Activated B cell treated with CpG ODN at 0.5 μM for 24 hours (primary cell): ENCODE measurements at regions of chr1 and their contacts with region 1.

Region 1: GRCh38 chr1:169711469-169712281 is at the start of gene SELL:
- DNase-seq: no peak
- ATAC-seq: peak; percentile 78
- H3K4me3 Mint-ChIP-seq: peak within 1 kb of the TSS; percentile 90
- H3K27ac Mint-ChIP-seq: peak within 1 kb of the TSS; percentile 97
- H3K4me1 Mint-ChIP-seq: peaks cover 41% of the 10 kb centered on the region
- H3K27me3 Mint-ChIP-seq: no peaks in the 10 kb centered on the region
- CTCF ChIP-seq: peak; percentile 77
- total RNA-seq, gene SELL: 151 and 156 TPM in 2 replicates

Region 2: DNA sequence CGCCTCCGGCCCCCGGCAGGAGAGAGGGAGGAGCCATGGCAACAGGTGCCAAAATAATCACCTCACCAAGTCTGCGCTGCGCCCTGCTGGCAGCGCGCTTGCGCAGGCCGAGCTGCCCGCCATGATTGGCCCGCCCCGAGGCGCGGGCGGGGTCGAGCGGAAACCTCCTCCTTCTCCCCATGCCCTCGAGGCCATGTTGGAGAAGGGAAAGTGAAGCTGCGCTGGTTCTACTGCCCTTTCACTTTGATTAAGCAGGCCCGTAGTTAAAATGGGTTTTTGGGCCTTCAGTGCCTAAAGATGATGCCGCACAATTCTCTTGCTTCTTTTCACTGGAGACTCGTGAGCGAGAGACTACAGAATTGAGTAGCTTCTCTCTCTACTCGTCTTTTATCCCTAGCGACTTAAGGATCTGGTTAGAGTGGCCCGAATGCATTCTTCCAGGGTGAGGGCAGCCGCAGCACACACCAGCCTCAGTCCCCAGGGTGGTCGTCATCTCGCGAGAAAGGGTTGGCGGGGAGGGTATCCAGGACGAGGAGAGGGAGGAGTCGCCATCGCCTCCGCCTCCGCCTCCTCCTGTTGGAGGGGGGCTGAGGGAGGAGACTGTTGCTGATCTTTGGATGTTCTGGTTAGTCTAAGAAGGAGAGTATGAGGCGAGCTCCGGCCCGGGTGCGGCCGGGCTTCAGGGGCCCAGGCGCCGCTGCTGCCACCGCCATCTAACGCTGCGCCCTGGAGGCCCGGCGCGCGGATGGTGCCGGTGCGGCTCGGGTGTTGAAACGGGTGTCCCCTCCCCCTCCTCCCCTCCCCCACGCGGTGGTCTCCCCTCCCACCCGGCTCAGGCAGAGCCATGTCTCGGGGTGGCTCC is 1775.4 kb before region 1 on chr1 and contains the start of gene DCAF6:
- CTCF ChIA-PET with region 1: no interaction called
- POLR2A ChIA-PET with region 1: no interaction called
- intact Hi-C with region 1: loop called (anchors 10 kb)
- DNase-seq: peak; percentile 92
- ATAC-seq: peak; percentile 79
- H3K4me3 Mint-ChIP-seq: peak within 1 kb of the TSS; percentile 88
- H3K27ac Mint-ChIP-seq: peak within 1 kb of the TSS; percentile 100
- H3K4me1 Mint-ChIP-seq: peaks cover 35% of the 10 kb centered on the region
- H3K27me3 Mint-ChIP-seq: no peaks in the 10 kb centered on the region
- CTCF ChIP-seq: no peak
- total RNA-seq, gene DCAF6: 23.1 and 32.9 TPM in 2 replicates

Region 3: DNA sequence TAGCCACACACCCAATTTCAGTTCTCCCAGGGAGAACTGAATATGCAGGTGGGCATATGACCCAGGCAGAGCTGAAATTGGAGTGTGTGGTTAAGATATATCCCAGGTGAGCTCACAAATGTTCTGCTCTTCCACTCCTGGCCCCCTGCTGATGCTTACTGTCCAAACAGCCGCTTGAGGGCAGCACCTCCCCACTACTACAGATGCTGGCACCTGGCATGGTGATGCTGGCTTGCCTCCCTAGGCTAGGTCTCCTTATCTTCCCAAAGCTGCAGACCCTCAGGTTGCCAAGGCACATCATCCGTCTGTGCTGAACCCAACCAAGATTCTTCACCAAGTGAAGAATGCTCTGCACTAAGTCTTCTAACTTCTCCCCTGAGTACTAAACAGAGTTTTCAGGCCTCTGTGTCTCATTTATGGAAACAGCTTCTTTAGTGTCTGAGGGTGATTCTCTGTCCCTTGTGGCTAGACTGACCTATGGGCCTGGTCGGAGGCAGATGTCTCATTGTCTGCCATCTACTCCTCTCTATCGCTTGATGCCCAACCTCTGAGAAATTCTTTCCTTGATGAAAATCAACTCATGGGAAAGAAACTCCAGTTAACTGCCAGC is 1108.1 kb before region 1 on chr1:
- CTCF ChIA-PET with region 1: interaction called, 3 read pairs
- POLR2A ChIA-PET with region 1: no interaction called
- intact Hi-C with region 1: loop called (anchors 10 kb)
- DNase-seq: peak; percentile 31
- ATAC-seq: peak; percentile 45
- H3K4me3 Mint-ChIP-seq: no peak overlapping the region
- H3K27ac Mint-ChIP-seq: no peak overlapping the region
- H3K4me1 Mint-ChIP-seq: no peaks in the 10 kb centered on the region
- H3K27me3 Mint-ChIP-seq: peaks cover 8% of the 10 kb centered on the region
- CTCF ChIP-seq: no peak

Region 4: GRCh38 chr1:169295425-169295824 is 416.2 kb before region 1 on chr1:
- CTCF ChIA-PET with region 1: no interaction called
- POLR2A ChIA-PET with region 1: no interaction called
- intact Hi-C with region 1: no loop called
- DNase-seq: no peak
- ATAC-seq: no peak
- H3K4me3 Mint-ChIP-seq: no peak overlapping the region
- H3K27ac Mint-ChIP-seq: no peak overlapping the region
- H3K4me1 Mint-ChIP-seq: peaks cover 3% of the 10 kb centered on the region
- H3K27me3 Mint-ChIP-seq: no peaks in the 10 kb centered on the region
- CTCF ChIP-seq: no peak

Region 5: GRCh38 chr1:169485544-169486278 is 226.0 kb before region 1 on chr1 and contains the start of gene SLC19A2:
- CTCF ChIA-PET with region 1: no interaction called
- POLR2A ChIA-PET with region 1: interaction called, 5 read pairs
- intact Hi-C with region 1: loop called (anchors 1 kb)
- DNase-seq: peak; percentile 86
- ATAC-seq: peak; percentile 98
- H3K4me3 Mint-ChIP-seq: peak within 1 kb of the TSS; percentile 88
- H3K27ac Mint-ChIP-seq: peak within 1 kb of the TSS; percentile 82
- H3K4me1 Mint-ChIP-seq: peaks cover 27% of the 10 kb centered on the region
- H3K27me3 Mint-ChIP-seq: no peaks in the 10 kb centered on the region
- CTCF ChIP-seq: no peak
- total RNA-seq, gene SLC19A2: 3.0 and 3.6 TPM in 2 replicates

Region 6: DNA sequence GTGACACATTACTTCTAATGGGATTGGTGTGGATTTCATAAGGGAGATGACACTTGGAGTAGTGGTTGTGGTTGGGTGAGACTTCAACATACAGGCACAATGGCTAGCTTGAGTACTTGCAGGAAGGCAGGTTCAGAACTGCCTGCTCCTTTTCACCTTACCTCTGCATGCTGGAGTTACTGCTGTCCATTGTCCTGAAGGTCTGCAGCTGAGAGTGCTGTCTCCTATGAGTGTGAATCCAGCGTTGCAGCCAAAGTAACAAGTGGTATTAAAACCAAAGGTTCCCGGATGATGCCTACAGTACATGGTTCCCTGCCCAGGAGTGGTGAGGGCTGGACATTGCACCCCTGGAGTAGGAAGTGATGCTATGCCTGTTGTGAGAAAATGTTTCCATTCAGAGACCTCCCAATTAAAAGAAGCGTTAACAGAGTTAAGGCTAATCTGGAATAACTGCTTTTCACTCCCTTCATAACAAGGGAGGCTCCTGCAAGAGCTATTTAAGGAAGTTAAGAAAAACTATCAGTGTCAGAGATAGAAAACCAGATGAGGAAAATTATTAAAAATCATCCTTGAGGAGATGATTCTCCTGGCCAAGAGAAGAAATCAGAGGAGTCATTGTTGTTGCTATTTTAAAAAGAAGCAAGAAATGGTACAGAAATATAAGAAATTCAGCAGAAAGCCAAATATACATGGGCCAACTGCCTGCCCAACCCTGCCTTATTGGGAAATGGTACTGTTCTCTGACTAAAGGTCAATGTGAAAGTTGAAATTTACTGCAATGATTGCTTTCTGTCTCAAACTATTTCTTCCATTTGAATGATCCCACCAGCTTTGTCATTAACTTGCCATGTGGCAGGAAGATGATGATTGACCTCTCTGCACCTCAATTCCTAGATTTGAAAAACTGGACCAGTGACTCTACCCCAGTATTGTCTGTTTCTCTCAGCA is 115.6 kb before region 1 on chr1:
- CTCF ChIA-PET with region 1: interaction called, 312 read pairs
- POLR2A ChIA-PET with region 1: interaction called, 34 read pairs
- intact Hi-C with region 1: loop called (anchors 1 kb)
- DNase-seq: no peak
- ATAC-seq: no peak
- H3K4me3 Mint-ChIP-seq: no peak overlapping the region
- H3K27ac Mint-ChIP-seq: no peak overlapping the region
- H3K4me1 Mint-ChIP-seq: peaks cover 19% of the 10 kb centered on the region
- H3K27me3 Mint-ChIP-seq: no peaks in the 10 kb centered on the region
- CTCF ChIP-seq: no peak

Region 7: GRCh38 chr1:169680377-169681019 is 31.2 kb before region 1 on chr1:
- CTCF ChIA-PET with region 1: interaction called, 20 read pairs
- POLR2A ChIA-PET with region 1: interaction called, 20 read pairs
- intact Hi-C with region 1: loop called (anchors 1 kb)
- DNase-seq: no peak
- ATAC-seq: peak; percentile 84
- H3K4me3 Mint-ChIP-seq: peak overlapping the region; percentile 57
- H3K27ac Mint-ChIP-seq: peak overlapping the region; percentile 91
- H3K4me1 Mint-ChIP-seq: peaks cover 65% of the 10 kb centered on the region
- H3K27me3 Mint-ChIP-seq: no peaks in the 10 kb centered on the region
- CTCF ChIP-seq: no peak

Region 8: GRCh38 chr1:169779980-169780379 is 68.3 kb after region 1 on chr1:
- CTCF ChIA-PET with region 1: no interaction called
- POLR2A ChIA-PET with region 1: no interaction called
- intact Hi-C with region 1: no loop called
- DNase-seq: no peak
- ATAC-seq: no peak
- H3K4me3 Mint-ChIP-seq: no peak overlapping the region
- H3K27ac Mint-ChIP-seq: no peak overlapping the region
- H3K4me1 Mint-ChIP-seq: no peaks in the 10 kb centered on the region
- H3K27me3 Mint-ChIP-seq: peaks cover 21% of the 10 kb centered on the region
- CTCF ChIP-seq: no peak

Region 9: DNA sequence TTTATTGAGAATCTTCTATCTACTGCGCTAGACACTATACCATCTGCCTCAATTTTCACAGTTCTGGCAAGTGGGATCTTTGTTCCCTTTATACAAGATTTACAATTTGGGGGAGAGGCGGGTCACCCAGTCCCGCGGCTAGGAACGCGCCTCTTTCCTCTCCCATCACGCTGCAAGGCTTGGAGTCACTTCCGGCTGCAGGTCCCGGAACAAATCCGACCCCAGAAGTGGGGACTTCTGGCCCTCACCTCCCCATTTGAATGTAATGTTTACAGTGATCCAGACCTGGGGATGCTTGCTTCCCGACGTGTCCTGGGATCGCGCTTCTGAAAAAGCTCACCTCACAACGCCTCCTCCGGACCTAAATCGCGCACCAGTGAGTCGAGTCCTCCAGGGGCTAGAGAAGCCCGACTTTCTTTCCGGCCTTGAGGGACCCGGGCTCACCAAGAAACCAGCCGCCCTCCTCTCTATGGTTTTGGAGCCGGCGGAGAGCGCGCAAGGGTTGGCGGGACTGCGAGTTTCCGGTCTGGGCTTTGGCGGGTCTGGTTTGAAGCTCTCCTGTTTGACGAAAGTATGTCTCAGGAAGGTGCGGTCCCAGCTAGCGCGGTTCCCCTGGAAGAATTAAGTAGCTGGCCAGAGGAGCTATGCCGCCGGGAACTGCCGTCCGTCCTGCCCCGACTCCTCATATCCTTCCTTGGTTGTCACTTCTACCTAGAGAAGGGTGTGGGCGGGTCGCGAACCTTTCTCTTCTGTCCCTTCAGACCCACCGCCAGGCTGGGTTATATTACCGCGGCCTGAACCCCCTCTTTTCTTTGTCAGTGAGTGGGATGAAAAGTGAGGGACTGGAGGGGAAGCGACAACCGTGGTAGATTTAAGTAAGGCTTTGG is 83.1 kb after region 1 on chr1 and contains the start of gene METTL18:
- CTCF ChIA-PET with region 1: interaction called, 6 read pairs
- POLR2A ChIA-PET with region 1: interaction called, 5 read pairs
- intact Hi-C with region 1: loop called (anchors 1 kb)
- DNase-seq: peak; percentile 77
- ATAC-seq: peak; percentile 98
- H3K4me3 Mint-ChIP-seq: peak within 1 kb of the TSS; percentile 100
- H3K27ac Mint-ChIP-seq: peak within 1 kb of the TSS; percentile 99
- H3K4me1 Mint-ChIP-seq: peaks cover 50% of the 10 kb centered on the region
- H3K27me3 Mint-ChIP-seq: no peaks in the 10 kb centered on the region
- CTCF ChIP-seq: no peak
- total RNA-seq, gene METTL18: 12.0 and 14.5 TPM in 2 replicates